CD4-positive, alpha-beta memory T cell (primary cell): ENCODE measurements at regions of chr1 and their contacts with region 1.

Region 1: DNA sequence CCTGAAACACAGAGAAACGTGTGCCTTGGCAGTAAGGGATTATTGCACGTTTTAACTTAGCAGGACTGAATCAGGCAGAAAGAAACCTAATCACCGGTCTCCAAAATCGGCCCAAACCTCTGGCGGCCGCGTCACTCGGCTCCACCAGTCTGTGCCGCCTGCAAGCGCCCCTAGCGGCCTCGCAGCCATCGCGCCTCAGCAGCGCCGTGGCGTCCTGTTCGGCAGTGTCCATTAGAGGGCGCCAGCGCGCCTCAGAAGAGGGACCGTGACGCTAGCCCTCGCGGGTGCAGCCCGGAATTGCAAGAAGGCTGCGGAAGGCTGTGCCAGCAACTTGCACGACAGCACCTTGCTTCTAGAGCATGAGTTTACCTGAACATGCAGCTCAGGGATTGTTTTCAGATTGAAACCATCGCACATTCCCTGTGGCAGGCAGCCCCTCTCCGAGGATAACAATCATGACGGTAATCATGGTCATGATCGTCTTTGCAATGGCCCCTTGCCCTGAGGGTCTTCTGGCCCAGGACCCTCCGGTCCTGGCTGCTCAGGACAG is 164.4 kb downstream of the TRIM33 start:
- DNase-seq: peak; percentile 93 to 99 (median 97)
- H3K4me3 ChIP-seq: peak overlapping the region; percentile 54 to 71
- H3K4me3 Mint-ChIP-seq: peak overlapping the region; percentile 86 to 98 (median 94)
- H3K27ac ChIP-seq: no peak overlapping the region
- H3K27ac Mint-ChIP-seq: peak overlapping the region; percentile 81 to 98 (median 97)
- H3K4me1 ChIP-seq: peaks cover 46% of the 10 kb centered on the region
- H3K4me1 Mint-ChIP-seq: peaks cover 19 to 49% (median 35%) of the 10 kb centered on the region in 4 donors
- H3K27me3 ChIP-seq: no peaks in the 10 kb centered on the region
- H3K27me3 Mint-ChIP-seq: no peaks in the 10 kb centered on the region

Region 2: GRCh38 chr1:114282751-114283403 is 63.7 kb before region 1 on chr1:
- CTCF ChIA-PET with region 1: interaction called, 24 read pairs
- POLR2A ChIA-PET with region 1: interaction called, 7 read pairs
- intact Hi-C with region 1: no loop called
- DNase-seq: peak; percentile 76 to 81 (median 78)
- H3K4me3 ChIP-seq: no peak overlapping the region
- H3K4me3 Mint-ChIP-seq: no peak overlapping the region
- H3K27ac ChIP-seq: no peak overlapping the region
- H3K27ac Mint-ChIP-seq: no peak overlapping the region
- H3K4me1 ChIP-seq: no peaks in the 10 kb centered on the region
- H3K4me1 Mint-ChIP-seq: peaks cover 0 to 5% (median under 1%) of the 10 kb centered on the region in 4 donors
- H3K27me3 ChIP-seq: no peaks in the 10 kb centered on the region
- H3K27me3 Mint-ChIP-seq: peaks cover 0 to 1% of the 10 kb centered on the region in 2 donors

Region 3: GRCh38 chr1:114428083-114428749 is 81.7 kb after region 1 on chr1:
- CTCF ChIA-PET with region 1: interaction called, 69 read pairs
- POLR2A ChIA-PET with region 1: no interaction called
- intact Hi-C with region 1: loop called (anchors 1 kb)
- DNase-seq: peak; percentile 14 to 39 (median 19)
- H3K4me3 ChIP-seq: no peak overlapping the region
- H3K4me3 Mint-ChIP-seq: no peak overlapping the region
- H3K27ac ChIP-seq: no peak overlapping the region
- H3K27ac Mint-ChIP-seq: peak overlapping the region in 1 of 7 donors; percentile 65
- H3K4me1 ChIP-seq: no peaks in the 10 kb centered on the region
- H3K4me1 Mint-ChIP-seq: no peaks in the 10 kb centered on the region
- H3K27me3 ChIP-seq: no peaks in the 10 kb centered on the region
- H3K27me3 Mint-ChIP-seq: no peaks in the 10 kb centered on the region

Region 4: DNA sequence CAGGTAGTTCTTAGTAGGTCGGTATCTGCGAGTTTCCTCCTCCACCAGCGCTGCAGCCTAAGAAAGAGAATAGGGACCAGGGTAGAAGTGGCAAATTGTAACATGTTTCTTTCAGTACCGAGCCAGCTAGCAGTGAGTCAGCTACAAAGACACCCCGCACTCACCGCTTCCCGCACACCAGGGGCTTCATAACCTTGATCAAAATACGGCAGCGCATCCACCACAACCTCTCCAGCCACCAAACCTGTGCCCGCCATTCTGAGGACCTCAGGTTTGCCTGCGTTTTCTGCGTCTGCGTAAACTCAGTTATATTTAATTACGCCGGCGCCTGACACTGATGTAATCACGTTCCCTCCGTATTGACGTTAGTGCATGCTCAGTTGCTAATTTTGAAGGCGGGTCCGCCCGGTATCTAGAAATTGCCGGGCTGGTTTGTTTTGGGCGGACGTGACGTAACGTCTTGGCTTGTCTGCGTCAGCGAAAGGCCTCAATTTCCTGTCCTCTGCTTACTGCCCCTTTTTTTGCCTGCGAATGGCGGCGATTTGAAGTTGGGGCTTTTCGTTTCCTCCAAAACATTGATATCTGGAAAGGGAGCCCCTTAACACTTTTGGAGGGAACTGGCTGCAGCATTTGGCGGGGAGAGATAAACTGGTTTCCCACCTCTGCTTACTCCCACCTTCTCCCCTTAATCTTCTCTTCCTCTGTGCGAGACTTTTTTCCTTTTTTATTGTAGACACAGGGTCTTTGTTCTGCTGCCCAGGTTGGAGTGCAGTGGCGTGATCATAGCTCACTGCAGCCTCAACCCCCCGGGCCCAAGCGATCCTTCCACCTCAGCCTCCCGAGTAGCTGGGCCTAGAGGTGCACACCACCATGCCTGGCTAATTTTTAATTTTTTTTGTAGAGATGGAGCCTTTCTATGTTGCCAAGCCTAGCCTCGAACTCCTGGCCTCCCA is 235.1 kb after region 1 on chr1 and contains the start of gene BCAS2:
- CTCF ChIA-PET with region 1: interaction called, 11 read pairs
- POLR2A ChIA-PET with region 1: interaction called, 3 read pairs
- intact Hi-C with region 1: loop called (anchors 2 kb)
- DNase-seq: peak; percentile 93 to 98 (median 97)
- H3K4me3 ChIP-seq: peak within 1 kb of the TSS; percentile 76 to 80
- H3K4me3 Mint-ChIP-seq: peak within 1 kb of the TSS; percentile 95 to 99 (median 96)
- H3K27ac ChIP-seq: peak within 1 kb of the TSS; percentile 90
- H3K27ac Mint-ChIP-seq: peak within 1 kb of the TSS; percentile 92 to 100 (median 99)
- H3K4me1 ChIP-seq: peaks cover 30% of the 10 kb centered on the region
- H3K4me1 Mint-ChIP-seq: peaks cover 14 to 42% (median 27%) of the 10 kb centered on the region in 4 donors
- H3K27me3 ChIP-seq: no peaks in the 10 kb centered on the region
- H3K27me3 Mint-ChIP-seq: peaks cover 0 to 1% of the 10 kb centered on the region in 2 donors
- total RNA-seq, gene BCAS2: 33.9 to 40.8 TPM

Region 5: DNA sequence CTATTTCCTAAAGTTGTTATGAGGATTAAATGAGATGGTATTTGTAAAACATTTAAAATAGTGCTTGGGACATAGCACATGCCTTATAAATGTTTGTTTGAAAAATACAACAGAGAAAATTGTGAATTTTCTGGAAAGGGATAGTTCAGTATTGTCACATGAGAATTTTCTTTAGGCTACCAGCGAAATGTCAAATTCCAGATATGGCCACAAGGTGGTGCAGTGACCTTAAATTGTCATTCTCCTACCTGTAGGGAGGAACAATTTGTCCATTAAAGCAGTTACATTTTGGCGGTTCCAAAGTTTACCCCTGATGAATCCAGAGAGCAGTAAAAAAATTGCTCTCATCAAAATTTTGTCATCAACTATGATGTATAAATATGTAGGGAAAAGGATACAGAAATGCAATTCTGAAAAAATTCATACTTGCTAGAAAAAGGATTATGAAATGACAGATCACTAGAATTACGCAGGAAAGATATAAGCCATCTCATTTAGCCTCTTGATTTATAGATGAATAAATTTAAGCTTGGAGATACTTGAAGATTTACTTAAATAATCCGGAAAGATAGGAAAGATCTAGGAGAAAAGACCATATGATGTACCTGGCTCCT is 632.8 kb after region 1 on chr1:
- CTCF ChIA-PET with region 1: no interaction called
- POLR2A ChIA-PET with region 1: no interaction called
- intact Hi-C with region 1: loop called (anchors 5 kb)
- DNase-seq: peak; percentile 57 to 67 (median 64)
- H3K4me3 ChIP-seq: no peak overlapping the region
- H3K4me3 Mint-ChIP-seq: no peak overlapping the region
- H3K27ac ChIP-seq: no peak overlapping the region
- H3K27ac Mint-ChIP-seq: no peak overlapping the region
- H3K4me1 ChIP-seq: no peaks in the 10 kb centered on the region
- H3K4me1 Mint-ChIP-seq: no peaks in the 10 kb centered on the region
- H3K27me3 ChIP-seq: no peaks in the 10 kb centered on the region
- H3K27me3 Mint-ChIP-seq: peaks cover 10 to 12% of the 10 kb centered on the region in 2 donors